Calu3 (cell line): ENCODE measurements at regions of chr14 and their contacts with region 1.

Region 1: GRCh38 chr14:78029601-78030372 is 140.4 kb upstream of the NRXN3 start:
- DNase-seq: no peak
- H3K4me3 Mint-ChIP-seq: no peak overlapping the region
- H3K27ac Mint-ChIP-seq: no peak overlapping the region
- H3K4me1 Mint-ChIP-seq: no peaks in the 10 kb centered on the region
- H3K27me3 Mint-ChIP-seq: peaks cover 57% of the 10 kb centered on the region
- CTCF ChIP-seq: no peak

Region 2: DNA sequence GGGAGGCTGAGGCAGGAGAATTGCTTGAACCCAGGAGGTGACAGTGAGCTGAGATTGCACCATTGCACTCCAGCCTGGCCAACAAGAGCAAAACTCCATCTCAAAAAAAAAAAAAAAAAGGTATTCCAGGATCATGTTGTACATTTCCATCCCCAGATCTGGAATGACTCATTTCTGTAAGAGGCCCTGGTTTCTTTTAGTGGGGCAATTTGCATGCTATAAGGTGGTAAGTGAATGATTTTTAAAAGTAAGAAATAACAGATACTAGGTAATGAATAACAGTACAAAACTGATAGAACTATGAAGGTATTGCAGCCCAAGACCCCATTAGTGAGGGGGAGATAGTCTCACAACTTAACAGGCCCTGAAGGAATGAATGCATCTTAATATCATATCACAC is 247.6 kb before region 1 on chr14:
- CTCF ChIA-PET with region 1: no interaction called
- intact Hi-C with region 1: no loop called
- DNase-seq: no peak
- H3K4me3 Mint-ChIP-seq: no peak overlapping the region
- H3K27ac Mint-ChIP-seq: no peak overlapping the region
- H3K4me1 Mint-ChIP-seq: no peaks in the 10 kb centered on the region
- H3K27me3 Mint-ChIP-seq: no peaks in the 10 kb centered on the region
- CTCF ChIP-seq: no peak

Region 3: GRCh38 chr14:77892381-77892871 is 137.4 kb before region 1 on chr14:
- CTCF ChIA-PET with region 1: no interaction called
- intact Hi-C with region 1: no loop called
- DNase-seq: no peak
- H3K4me3 Mint-ChIP-seq: no peak overlapping the region
- H3K27ac Mint-ChIP-seq: no peak overlapping the region
- H3K4me1 Mint-ChIP-seq: no peaks in the 10 kb centered on the region
- H3K27me3 Mint-ChIP-seq: no peaks in the 10 kb centered on the region
- CTCF ChIP-seq: no peak

Region 4: DNA sequence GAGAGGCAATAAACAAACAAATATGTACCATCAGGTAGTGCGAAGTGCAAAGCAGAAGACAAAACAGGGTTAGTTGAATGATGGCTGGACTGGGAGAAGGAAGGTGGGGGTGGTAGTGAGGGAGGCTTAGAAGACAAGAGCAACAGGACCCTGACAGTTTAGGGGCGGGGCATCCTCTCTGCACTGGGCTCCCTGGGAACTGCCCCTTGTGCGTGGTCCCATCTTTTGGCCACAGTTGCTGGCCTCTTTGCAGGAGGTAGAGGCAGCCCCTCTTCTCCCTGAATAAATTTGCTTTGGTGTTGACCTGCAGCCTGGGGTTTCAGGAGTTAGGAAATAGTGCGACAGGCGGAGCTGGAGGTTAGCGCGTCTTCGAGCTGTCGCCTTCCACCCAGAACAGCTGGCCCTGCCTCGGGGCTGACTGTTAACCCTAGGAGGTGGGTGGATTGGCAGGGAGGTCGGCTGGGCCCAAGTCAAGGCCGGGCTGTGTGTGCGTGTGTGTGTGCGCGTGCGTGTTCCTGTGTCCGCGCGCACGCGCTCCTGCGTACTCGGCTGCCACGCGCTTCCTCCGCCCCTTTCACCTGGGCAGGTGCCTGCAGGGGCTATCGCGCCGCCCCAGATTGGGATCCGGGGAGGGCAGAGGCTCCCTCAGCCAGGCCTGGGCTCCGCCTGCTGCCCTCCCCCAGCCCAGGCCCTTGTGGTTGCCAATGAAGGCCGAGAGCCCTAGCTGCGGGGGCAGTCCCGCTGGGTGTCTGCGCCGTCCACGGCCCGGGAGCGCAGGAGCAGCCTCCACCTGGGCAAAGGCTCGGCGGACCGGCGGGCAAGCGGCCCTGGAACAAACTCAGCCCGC is 49.1 kb before region 1 on chr14:
- CTCF ChIA-PET with region 1: no interaction called
- intact Hi-C with region 1: loop called (anchors 2 kb)
- DNase-seq: peak; percentile 69
- H3K4me3 Mint-ChIP-seq: peak overlapping the region; percentile 63
- H3K27ac Mint-ChIP-seq: no peak overlapping the region
- H3K4me1 Mint-ChIP-seq: peaks cover 11% of the 10 kb centered on the region
- H3K27me3 Mint-ChIP-seq: peaks cover 21% of the 10 kb centered on the region
- CTCF ChIP-seq: no peak

Region 5: DNA sequence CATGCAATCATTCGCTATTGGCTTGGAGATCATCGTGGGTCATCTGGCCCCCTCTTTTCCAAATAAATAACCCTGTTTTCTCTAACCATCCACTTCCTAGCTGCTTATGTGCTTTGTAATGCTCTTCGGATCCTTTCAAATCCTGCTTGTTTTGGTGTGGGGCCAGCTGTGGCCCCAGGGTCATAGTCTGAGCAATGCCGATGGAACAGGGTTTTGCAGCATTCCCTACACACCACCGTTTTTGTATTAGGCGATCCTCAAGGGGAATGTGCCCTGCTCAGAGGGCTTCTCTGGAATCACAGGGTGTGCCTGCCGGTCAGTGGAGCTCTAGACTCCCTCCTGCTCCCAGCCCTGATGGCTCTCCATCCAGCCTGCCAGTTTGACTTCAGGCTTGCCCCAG is 62.3 kb after region 1 on chr14:
- CTCF ChIA-PET with region 1: no interaction called
- intact Hi-C with region 1: loop called (anchors 2 kb)
- DNase-seq: no peak
- H3K4me3 Mint-ChIP-seq: no peak overlapping the region
- H3K27ac Mint-ChIP-seq: no peak overlapping the region
- H3K4me1 Mint-ChIP-seq: no peaks in the 10 kb centered on the region
- H3K27me3 Mint-ChIP-seq: peaks cover 25% of the 10 kb centered on the region
- CTCF ChIP-seq: no peak

Region 6: DNA sequence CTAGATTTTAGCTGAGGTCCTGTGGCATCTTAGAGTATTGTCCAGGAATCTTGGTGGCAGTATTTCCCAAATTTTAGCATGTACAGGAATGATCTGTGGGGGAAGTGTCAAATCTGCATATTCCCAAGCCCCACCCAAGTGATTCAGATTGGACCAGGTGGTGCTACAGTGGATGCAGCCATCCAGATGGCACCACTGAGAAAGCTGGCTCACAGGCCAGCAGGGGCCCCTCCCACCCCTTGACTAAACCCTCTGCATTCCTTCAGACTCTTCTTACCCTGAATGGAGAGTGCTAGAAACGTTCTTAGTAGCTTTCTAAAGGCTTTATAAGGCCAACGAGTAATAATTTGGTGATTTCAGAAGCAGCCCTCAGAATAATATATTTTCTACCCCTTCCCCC is 395.5 kb after region 1 on chr14:
- CTCF ChIA-PET with region 1: no interaction called
- intact Hi-C with region 1: no loop called
- DNase-seq: no peak
- H3K4me3 Mint-ChIP-seq: no peak overlapping the region
- H3K27ac Mint-ChIP-seq: no peak overlapping the region
- H3K4me1 Mint-ChIP-seq: no peaks in the 10 kb centered on the region
- H3K27me3 Mint-ChIP-seq: peaks cover 38% of the 10 kb centered on the region
- CTCF ChIP-seq: no peak